Endothelial cell of umbilical vein (primary cell): ENCODE measurements at regions of chr10 and their contacts with region 1.

Region 1: DNA sequence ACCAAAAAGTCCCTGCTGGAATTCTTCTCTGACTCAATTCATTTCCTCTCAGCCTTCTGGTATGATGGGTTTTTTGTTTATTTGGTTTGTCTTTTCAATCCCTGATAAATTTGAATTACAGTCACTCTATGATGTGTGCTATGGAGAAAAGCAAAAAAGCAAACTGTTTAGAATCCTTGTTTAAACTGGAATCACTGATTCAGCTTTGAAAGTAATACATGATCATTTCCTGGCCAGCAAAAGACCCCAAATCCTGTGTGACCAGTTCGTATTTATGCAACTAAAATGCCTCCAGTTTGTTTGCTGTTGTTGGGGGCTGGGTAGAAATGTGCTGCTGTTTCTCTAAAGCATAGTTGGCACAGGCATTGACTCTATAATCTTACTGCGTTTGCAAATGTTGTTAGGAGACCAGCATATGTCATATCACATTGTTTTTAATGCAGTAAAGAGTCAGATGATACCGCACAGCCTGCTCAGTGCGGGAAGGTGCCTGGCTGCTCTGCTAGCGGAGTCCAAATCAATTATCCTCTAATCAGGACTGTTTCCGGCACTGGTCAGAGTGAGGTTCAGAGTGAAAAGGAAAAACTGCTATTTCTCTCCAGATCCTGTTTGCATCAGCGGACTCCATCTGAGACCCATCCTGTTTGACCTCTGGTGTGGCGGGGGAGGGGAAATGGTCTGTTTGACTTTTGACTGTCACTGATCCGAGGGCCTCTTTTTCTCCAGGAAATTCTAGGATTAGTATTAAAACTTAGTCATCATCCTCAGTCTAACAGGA is 40.6 kb upstream of the ADD3 start:
- DNase-seq: peak; percentile 87
- H3K4me3 ChIP-seq: peak overlapping the region in 2 of 3 experiments; percentile 4 to 23
- H3K27ac ChIP-seq: peak overlapping the region; percentile 66
- H3K4me1 ChIP-seq: peaks cover 33% of the 10 kb centered on the region
- H3K27me3 ChIP-seq: no peaks in the 10 kb centered on the region
- CTCF ChIP-seq: no peak
- POLR2A ChIP-seq: no peak

Region 2: GRCh38 chr10:109922976-109923921 is 43.9 kb before region 1 on chr10 and contains the start of gene XPNPEP1:
- CTCF ChIA-PET with region 1: no interaction called
- POLR2A ChIA-PET with region 1: no interaction called
- dilution Hi-C with region 1: no loop called
- intact Hi-C with region 1: loop called (anchors 5 kb)
- DNase-seq: peak; percentile 86
- H3K4me3 ChIP-seq: peak within 1 kb of the TSS; percentile 58 to 91 (median 80)
- H3K27ac ChIP-seq: peak within 1 kb of the TSS; percentile 92
- H3K4me1 ChIP-seq: peaks cover 12% of the 10 kb centered on the region
- H3K27me3 ChIP-seq: no peaks in the 10 kb centered on the region
- CTCF ChIP-seq: peak in 1 of 2 donors; percentile 4
- POLR2A ChIP-seq: peak; percentile 91
- total RNA-seq, gene XPNPEP1: 81.1 and 87.3 TPM in 2 replicates

Region 3: DNA sequence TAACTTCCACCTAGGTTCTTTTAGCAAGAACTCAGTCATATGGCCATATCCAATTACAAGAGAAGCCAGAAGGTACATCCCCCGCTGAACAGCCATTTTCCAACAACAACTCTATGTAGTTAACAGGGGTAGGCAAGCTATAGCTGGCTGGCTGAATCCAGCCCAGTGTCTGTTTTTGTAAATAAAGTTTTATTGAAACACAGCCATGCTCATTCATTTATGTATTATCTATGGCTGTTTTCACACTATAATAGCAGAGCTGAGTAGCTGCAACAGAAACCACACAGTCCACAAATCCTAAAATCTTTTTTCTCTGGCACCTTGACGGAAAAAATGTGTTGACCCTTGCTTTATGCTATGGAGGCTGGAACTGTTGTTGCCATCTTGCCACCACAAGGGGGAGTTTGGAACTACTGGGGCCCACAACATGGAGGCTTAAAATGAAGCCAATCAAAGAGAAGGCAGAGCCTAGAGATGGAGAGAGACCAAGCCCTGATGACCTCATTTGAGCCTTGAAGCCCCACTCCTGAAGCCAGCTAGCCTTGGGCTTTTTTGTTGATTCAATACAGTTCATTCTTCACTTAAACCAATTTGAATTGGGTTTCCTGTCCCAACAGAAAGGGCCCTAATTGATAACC is 10.6 kb before region 1 on chr10:
- CTCF ChIA-PET with region 1: interaction called, 3 read pairs
- POLR2A ChIA-PET with region 1: no interaction called
- dilution Hi-C with region 1: no loop called
- intact Hi-C with region 1: loop called (anchors 1 kb)
- DNase-seq: peak; percentile 41
- H3K4me3 ChIP-seq: no peak overlapping the region
- H3K27ac ChIP-seq: no peak overlapping the region
- H3K4me1 ChIP-seq: no peaks in the 10 kb centered on the region
- H3K27me3 ChIP-seq: peaks cover 0 to 2% of the 10 kb centered on the region in 2 experiments
- CTCF ChIP-seq: peak; percentile 55 to 70
- POLR2A ChIP-seq: no peak

Region 4: DNA sequence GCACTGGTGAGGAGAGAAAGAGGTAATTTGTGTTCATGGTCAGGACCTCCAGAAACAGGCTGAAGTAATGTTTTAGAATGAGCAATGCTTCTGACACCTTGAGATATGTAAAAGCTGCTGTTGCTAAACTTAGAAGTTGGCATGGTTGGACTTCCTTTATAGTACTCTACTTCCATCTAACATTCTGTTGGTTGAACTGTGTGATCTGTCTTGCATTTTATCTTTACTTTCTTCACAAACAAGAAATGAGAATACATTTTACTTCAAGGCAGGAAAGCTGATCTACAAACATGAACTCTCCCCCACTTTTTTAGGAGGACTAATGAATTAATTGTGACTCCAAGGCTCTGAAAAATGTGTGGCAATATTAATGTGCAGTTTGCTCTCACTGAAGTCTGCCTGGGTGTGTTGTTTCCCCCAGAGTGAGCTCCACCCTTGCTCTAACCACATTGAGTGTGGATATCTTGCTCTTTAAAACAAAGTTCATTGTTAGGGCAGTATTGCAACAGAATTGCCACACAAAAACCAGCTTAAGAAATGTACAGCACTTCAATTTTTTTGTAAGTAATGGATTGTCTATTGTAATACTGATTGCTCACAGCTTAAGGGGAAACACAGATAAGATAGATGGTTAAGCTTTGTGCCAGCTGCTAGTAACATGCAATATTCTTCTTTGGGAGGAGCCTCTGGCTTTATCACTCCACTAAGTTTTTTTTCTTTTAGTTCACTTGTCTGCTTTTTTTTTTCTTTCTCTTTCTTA is 109.6 kb after region 1 on chr10:
- CTCF ChIA-PET with region 1: interaction called, 3 read pairs
- POLR2A ChIA-PET with region 1: no interaction called
- dilution Hi-C with region 1: no loop called
- intact Hi-C with region 1: loop called (anchors 1 kb)
- DNase-seq: peak; percentile 91
- H3K4me3 ChIP-seq: peak overlapping the region in 1 of 3 experiments; percentile 23
- H3K27ac ChIP-seq: peak overlapping the region; percentile 83
- H3K4me1 ChIP-seq: peaks cover 53% of the 10 kb centered on the region
- H3K27me3 ChIP-seq: no peaks in the 10 kb centered on the region
- CTCF ChIP-seq: no peak
- POLR2A ChIP-seq: no peak

Region 5: GRCh38 chr10:110210674-110211464 is 243.7 kb after region 1 on chr10:
- CTCF ChIA-PET with region 1: no interaction called
- POLR2A ChIA-PET with region 1: no interaction called
- dilution Hi-C with region 1: no loop called
- intact Hi-C with region 1: loop called (anchors 5 kb)
- DNase-seq: peak; percentile 99
- H3K4me3 ChIP-seq: peak overlapping the region; percentile 48 to 68 (median 57)
- H3K27ac ChIP-seq: no peak overlapping the region
- H3K4me1 ChIP-seq: peaks cover 4% of the 10 kb centered on the region
- H3K27me3 ChIP-seq: peaks cover 21 to 29% of the 10 kb centered on the region in 2 experiments
- CTCF ChIP-seq: no peak
- POLR2A ChIP-seq: no peak